ENCODE measurements at regions of chr11 and their contacts with region 1.

Region 1: DNA sequence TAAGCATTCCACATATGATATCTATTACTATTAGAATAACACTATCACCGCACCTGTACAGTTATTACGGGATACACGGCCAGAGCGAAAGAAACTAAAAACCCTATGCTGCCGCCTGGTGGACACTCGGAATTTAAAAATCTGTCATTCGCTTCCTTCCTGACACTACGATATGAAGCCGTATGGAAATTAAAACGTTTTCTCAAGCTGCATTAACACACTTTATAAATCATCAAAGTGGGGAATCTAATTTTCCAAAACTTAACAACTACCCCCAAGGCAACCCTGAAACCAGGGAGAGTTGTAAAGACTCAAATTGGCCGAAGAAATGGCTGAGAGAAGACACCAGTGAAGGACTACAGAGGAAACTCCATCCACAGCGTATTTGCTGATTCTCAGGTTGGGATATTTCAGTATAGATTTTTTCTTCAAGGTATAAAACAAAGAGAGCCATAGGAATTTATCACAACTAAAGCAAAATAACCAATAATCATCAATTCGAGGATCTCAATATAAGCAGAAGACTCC is 1.4 kb downstream of the CCDC73 start:
- DNase-seq: peak; percentile 67
- H3K4me3 ChIP-seq: no peak overlapping the region
- H3K27ac ChIP-seq: no peak overlapping the region
- H3K4me1 ChIP-seq: no peaks in the 10 kb centered on the region
- H3K27me3 ChIP-seq: no peaks in the 10 kb centered on the region
- CTCF ChIP-seq: peak; percentile 50

Region 2: DNA sequence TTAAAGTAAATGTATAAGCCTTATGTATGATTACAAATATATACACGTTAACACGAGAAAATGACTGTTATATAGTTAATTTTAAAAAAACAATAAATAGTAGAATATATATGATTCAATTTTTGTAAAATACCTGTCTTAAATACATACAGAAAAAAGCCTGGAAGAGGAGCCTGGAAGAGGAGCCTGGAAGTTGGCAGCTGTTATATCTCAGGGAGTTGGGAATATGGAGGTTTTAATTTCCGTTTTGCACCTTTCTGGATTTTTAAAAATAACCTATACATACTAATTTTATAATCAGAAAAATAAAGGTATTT is 469.2 kb before region 1 on chr11:
- intact Hi-C with region 1: loop called (anchors 5 kb)
- DNase-seq: no peak
- H3K4me3 ChIP-seq: no peak overlapping the region
- H3K27ac ChIP-seq: no peak overlapping the region
- H3K4me1 ChIP-seq: no peaks in the 10 kb centered on the region
- H3K27me3 ChIP-seq: peaks cover 2% of the 10 kb centered on the region
- CTCF ChIP-seq: no peak

Measured in colonic mucosa (tissue), 4 donors.